Posterior cingulate gyrus (tissue), 11 donors: ENCODE measurements at regions of chr11 and their contacts with region 1.

Region 1: GRCh38 chr11:7688238-7688826 is 15.0 kb upstream of the CYB5R2 start:
- DNase-seq: peak in 3 of 10 donors; percentile 11 to 81 (median 31)

Region 2: GRCh38 chr11:7098235-7098832 is 590.0 kb before region 1 on chr11:
- intact Hi-C with region 1: loop called (anchors 5 kb)
- DNase-seq: no peak

Region 3: DNA sequence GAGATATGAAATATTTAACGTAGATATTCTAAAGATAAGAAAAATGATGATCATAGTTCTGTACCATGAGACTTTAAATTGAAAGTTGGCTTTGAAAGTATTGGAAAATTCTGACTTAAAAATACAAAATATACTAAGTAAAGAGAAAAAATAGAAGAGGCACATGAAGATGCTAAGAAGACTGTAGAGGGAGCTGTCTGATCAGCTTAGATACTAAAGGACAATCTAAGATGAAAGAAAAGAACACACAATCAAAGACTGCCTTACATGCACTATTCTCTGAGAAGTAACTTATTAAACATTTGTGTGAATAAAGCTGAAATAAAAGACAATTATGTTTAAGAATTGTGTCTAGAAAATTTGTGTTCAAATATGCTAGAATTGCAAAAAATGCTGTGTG is 544.4 kb before region 1 on chr11:
- intact Hi-C with region 1: loop called (anchors 5 kb)
- DNase-seq: no peak

Region 4: DNA sequence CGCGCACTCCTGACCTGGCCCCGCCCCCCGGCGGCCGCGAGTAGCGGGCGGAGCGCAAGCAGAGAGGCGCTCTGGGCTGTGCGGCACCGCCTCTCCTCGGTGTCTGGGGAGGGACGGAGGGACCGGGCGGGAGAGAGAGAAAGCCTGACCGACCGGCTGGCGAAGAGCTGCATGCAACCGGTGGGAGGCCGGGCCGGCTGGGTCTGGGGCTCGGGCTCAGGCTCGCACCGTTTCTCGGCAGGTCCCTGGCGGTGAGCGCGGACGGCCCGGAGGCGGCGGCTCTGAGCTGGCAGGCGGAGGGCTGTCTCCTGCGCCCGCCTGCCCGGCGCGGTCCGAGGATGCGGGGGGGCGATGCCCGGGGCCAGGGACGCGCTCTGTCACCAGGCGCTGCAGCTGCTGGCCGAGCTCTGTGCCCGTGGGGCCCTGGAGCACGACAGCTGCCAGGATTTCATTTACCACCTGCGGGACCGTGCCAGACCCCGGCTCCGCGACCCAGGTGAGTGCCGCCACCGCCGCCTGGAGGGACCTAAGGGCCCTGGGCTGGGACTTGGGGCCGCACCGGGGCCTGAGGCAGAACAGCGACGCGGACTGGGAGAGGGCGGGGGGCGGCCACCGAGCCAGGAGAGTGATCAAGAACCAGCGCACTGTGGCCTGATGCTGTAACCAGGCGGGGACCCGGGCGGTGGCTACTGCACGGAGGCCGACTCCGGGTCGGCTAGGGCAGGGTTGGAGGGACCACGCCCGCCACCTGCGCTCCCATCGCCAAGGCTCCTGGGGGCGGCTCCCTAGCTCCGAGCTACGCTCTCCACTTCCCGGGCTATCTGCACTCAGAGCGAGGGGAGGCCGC is 436.3 kb before region 1 on chr11 and contains the start of gene SYT9:
- intact Hi-C with region 1: loop called (anchors 10 kb)
- DNase-seq: peak; percentile 56 to 96 (median 71)

Region 5: GRCh38 chr11:7430496-7430895 is 257.8 kb before region 1 on chr11:
- intact Hi-C with region 1: no loop called
- DNase-seq: no peak

Region 6: GRCh38 chr11:7442588-7443215 is 245.6 kb before region 1 on chr11:
- intact Hi-C with region 1: loop called (anchors 10 kb)
- DNase-seq: peak; percentile 40 to 97 (median 84)

Region 7: DNA sequence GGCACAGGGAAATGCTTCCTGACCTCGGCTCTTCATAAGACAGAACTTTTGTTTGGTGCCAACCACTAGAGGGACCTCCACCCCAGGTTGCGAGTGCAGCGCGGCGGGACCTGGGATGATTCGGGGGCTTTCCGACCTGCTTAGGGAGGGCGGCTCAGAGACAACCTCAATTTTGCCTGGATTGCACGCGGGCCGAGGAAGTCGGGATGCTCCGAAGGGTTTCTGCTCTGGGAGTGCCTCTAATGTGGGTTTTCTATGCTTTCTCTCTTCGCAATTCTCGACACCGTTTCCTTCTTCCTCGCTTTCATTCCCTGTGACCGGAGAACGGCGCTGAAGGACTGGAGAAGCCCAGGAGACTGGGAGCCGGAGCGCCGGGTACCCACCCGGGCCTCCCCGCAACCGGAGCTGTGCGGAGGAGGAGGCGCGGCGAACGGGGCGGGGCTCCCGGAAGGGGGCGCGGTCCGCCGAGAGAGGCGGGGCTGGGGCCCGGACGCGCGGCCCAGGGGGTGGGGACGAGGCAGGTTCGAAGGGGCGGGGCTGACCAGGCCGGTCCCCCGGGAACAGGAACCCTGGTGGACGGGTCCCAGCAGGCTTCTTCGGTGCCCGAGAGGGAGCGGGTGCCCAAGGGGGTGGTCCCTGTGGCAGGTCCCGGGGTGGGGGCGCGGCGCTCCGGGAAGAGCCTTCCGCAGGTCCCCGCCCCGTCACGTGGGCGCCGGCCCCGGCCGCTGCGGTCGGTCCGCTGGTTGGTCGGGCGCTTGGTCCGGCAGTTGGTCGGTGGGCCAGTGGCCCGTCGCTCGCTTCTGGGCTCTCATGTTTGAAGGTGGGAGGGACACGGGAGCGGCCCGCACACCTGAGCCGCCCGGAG is 174.9 kb before region 1 on chr11 and contains the start of gene PPFIBP2:
- intact Hi-C with region 1: loop called (anchors 5 kb)
- DNase-seq: peak; percentile 67 to 97 (median 82)

Region 8: DNA sequence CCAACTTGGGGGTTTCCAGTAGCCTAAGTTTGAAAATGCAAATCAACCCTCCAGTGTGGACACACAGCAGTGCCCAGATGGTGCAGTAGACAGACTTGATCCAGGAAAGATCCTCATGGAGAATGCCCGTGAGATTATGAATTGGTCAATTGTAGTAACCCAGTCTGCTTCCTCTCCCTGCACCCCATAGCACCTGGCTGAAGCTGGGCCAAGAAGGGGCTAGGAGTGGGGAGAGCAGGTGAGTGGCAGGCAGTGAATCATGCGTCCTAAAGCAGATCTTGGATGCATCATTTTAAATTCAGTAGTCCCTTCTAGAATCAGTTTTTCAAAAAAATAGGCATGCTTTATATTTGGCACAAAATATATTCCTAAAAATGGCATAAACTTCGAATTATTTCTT is 67.2 kb before region 1 on chr11:
- intact Hi-C with region 1: no loop called
- DNase-seq: no peak